Activated T-helper 2 cell treated with anti-CD3 and anti-CD28 coated beads, Interferon-gamma antibody, Interleukin-2, Interleukin-4, amounts not matched to agents 10 μg/mL and 5 μg/mL and 100 μg/mL, durations not matched to agents 14 hours and 24 hours and 36 hours (primary cell): ENCODE measurements at regions of chr12 and their contacts with region 1.

Region 1: DNA sequence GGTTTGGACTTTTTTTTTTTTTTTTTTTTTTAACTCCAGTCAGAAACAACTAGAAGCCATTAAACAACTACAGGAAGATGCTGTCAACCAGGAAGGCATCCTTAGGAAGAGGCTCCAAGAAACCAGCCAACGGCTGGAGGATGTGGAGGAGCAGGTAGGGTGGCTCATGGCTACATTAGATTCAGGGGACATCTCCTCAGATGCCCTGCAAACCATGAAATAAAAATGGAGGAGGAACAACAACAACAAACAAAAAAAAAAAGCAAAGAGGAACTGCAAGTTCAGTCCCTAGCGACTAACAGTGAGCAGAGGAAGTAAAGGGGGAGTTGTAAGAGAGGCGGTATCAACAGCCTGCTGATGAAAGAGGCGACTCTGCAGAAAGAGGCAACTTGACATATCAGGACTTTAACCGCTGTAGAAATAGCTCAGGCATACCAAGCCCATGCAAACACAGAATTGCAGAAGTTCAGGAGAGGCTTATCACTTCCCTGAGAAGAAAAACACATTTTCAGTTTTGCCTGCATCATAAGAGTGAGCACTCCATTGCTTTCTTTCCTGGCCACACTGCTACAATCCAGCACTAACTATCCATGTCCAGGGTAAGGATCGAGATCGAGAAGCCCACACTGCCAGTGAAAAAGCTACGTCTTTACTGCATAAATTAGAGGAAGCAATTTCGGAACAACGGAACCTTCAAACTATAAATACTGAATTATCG is 103.5 kb upstream of the BCAT1 start:
- DNase-seq: peak; percentile 61
- H3K4me3 Mint-ChIP-seq: peak overlapping the region; percentile 85
- H3K27ac Mint-ChIP-seq: peak overlapping the region; percentile 100
- H3K4me1 Mint-ChIP-seq: peaks cover 45% of the 10 kb centered on the region
- H3K27me3 Mint-ChIP-seq: peaks cover 3% of the 10 kb centered on the region

Region 2: GRCh38 chr12:24902511-24903328 is 149.6 kb before region 1 on chr12:
- intact Hi-C with region 1: loop called (anchors 1 kb)
- DNase-seq: peak; percentile 28
- H3K4me3 Mint-ChIP-seq: peak overlapping the region; percentile 96
- H3K27ac Mint-ChIP-seq: peak overlapping the region; percentile 93
- H3K4me1 Mint-ChIP-seq: peaks cover 36% of the 10 kb centered on the region
- H3K27me3 Mint-ChIP-seq: peaks cover 6% of the 10 kb centered on the region

Region 3: DNA sequence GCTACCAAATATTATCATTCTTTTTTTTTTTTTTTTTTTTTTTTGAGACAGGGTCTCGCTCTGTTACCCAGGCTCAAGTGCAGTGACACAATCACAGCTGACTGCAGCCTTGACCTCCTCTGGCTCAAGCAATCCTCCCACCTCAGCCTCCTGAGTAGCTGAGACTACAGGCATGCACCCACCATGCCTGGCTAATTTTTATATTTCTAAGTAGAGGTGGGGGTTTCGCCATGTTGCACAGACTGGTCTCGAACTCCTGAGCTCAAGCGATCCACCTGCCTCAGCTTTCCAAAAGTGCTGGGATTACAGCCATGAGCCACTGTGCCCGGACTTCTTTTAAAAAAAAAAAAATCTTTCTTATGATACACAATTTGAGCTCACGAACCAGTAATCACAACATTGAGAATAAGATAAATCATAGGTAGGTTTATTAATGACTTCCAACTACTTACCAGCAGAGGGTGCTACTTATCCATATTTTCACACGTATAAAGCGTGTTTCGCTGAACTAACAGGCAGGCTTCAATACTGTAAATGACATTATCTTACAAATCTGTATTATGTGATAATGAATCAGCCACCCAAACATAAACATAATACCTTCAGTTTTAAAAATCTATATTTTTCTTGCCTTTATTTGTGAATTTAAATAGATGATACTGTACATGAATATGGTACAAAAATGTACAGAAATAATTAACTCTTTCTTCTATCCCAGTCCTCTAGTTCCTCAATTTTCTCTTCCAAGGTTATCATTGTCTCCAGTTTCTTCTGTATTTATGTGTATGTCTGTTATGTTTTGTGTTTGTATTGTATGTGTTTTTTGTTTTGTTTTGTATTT is 60.9 kb before region 1 on chr12:
- intact Hi-C with region 1: loop called (anchors 2 kb)
- DNase-seq: no peak
- H3K4me3 Mint-ChIP-seq: no peak overlapping the region
- H3K27ac Mint-ChIP-seq: no peak overlapping the region
- H3K4me1 Mint-ChIP-seq: no peaks in the 10 kb centered on the region
- H3K27me3 Mint-ChIP-seq: peaks cover 19% of the 10 kb centered on the region

Region 4: GRCh38 chr12:25063873-25064628 is 11.7 kb after region 1 on chr12:
- intact Hi-C with region 1: loop called (anchors 1 kb)
- DNase-seq: no peak
- H3K4me3 Mint-ChIP-seq: no peak overlapping the region
- H3K27ac Mint-ChIP-seq: peak overlapping the region; percentile 21
- H3K4me1 Mint-ChIP-seq: peaks cover 32% of the 10 kb centered on the region
- H3K27me3 Mint-ChIP-seq: no peaks in the 10 kb centered on the region

Region 5: GRCh38 chr12:25130741-25131188 is 78.4 kb after region 1 on chr12:
- intact Hi-C with region 1: loop called (anchors 5 kb)
- DNase-seq: no peak
- H3K4me3 Mint-ChIP-seq: no peak overlapping the region
- H3K27ac Mint-ChIP-seq: no peak overlapping the region
- H3K4me1 Mint-ChIP-seq: no peaks in the 10 kb centered on the region
- H3K27me3 Mint-ChIP-seq: peaks cover 11% of the 10 kb centered on the region

Region 6: DNA sequence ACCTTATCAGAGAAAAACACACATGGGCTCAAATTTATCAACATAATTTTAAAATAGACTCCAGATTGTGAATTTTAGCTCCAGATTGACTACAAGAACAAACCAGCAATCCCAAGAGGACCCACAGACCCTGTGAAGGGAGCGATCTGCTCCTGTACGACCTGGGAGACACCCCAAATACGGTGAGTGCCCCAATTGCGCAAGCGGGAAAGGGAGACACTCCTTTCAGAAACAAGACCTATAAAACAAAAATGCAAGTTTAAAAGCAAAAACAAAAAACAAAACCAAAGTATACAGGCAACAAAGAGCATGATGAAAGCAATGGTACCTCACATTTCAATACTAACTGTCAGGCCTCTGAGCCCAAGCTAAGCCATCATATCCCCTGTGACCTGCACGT is 110.5 kb after region 1 on chr12:
- intact Hi-C with region 1: no loop called
- DNase-seq: no peak
- H3K4me3 Mint-ChIP-seq: no peak overlapping the region
- H3K27ac Mint-ChIP-seq: no peak overlapping the region
- H3K4me1 Mint-ChIP-seq: no peaks in the 10 kb centered on the region
- H3K27me3 Mint-ChIP-seq: peaks cover 14% of the 10 kb centered on the region

Region 7: GRCh38 chr12:25250744-25251730 is 198.7 kb after region 1 on chr12 and contains the start of gene KRAS:
- intact Hi-C with region 1: loop called (anchors 2 kb)
- DNase-seq: peak; percentile 88
- H3K4me3 Mint-ChIP-seq: peak within 1 kb of the TSS; percentile 90
- H3K27ac Mint-ChIP-seq: peak within 1 kb of the TSS; percentile 93
- H3K4me1 Mint-ChIP-seq: peaks cover 22% of the 10 kb centered on the region
- H3K27me3 Mint-ChIP-seq: peaks cover 16% of the 10 kb centered on the region
- total RNA-seq, gene KRAS: 25.2 TPM in 2 replicates

Region 8: GRCh38 chr12:26832822-26833742 is 1780.7 kb after region 1 on chr12 and contains the start of gene ITPR2:
- intact Hi-C with region 1: loop called (anchors 10 kb)
- DNase-seq: peak; percentile 88
- H3K4me3 Mint-ChIP-seq: peak within 1 kb of the TSS; percentile 95
- H3K27ac Mint-ChIP-seq: peak within 1 kb of the TSS; percentile 98
- H3K4me1 Mint-ChIP-seq: peaks cover 46% of the 10 kb centered on the region
- H3K27me3 Mint-ChIP-seq: no peaks in the 10 kb centered on the region
- total RNA-seq, gene ITPR2: 49.3 and 49.6 TPM in 2 replicates